Activated CD4-positive, alpha-beta T cell treated with anti-CD3 and anti-CD28 coated beads for 36 hours (primary cell): ENCODE measurements at regions of chr1 and their contacts with region 1.

Region 1: GRCh38 chr1:28914228-28915030 is at the start of gene EPB41:
- DNase-seq: peak; percentile 94
- ATAC-seq: peak; percentile 84
- H3K4me3 Mint-ChIP-seq: peak within 1 kb of the TSS; percentile 86
- H3K27ac Mint-ChIP-seq: peak within 1 kb of the TSS; percentile 93
- H3K4me1 Mint-ChIP-seq: peaks cover 47% of the 10 kb centered on the region
- H3K27me3 Mint-ChIP-seq: no peaks in the 10 kb centered on the region
- total RNA-seq, gene EPB41: 75.5 to 130 TPM

Region 2: DNA sequence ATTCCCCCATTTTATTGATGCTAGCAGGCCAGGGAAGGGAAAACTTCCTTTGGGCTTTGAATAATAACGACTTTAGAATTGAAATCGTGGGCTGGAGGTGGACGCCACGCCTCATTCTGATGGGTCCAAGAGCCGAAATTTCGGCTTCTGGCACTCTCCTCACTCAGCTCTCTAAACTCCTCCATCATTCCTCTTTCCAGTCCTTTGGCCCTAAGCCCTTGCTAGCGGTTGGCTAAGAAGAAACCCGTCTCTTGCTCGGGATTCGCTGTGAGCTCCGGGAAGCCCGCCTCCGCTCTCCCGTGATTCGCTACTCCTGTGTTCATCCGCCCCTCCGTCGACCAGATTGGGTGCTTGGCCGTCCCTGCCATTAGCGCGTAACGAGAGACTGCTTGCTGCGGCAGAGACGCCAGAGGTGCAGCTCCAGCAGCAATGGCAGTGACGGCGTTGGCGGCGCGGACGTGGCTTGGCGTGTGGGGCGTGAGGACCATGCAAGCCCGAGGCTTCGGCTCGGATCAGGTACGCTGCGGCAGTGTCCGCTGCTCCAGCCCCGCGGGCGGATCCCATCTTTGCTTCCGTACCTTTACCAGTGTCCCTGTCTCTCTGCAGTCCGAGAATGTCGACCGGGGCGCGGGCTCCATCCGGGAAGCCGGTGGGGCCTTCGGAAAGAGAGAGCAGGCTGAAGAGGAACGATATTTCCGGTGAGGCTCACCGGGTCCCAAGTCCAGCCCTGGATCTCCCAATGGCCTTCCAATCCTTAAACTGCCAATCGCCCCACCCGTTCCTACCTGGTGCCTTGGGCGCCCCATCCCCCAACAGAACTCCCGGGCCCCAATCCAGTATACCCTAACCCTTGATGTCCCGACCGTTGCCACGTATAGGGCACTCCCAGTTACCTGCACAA is 678.4 kb before region 1 on chr1 and contains the start of gene ATP5IF1:
- CTCF ChIA-PET with region 1: no interaction called
- POLR2A ChIA-PET with region 1: no interaction called
- intact Hi-C with region 1: no loop called
- DNase-seq: peak; percentile 97
- ATAC-seq: peak; percentile 97
- H3K4me3 Mint-ChIP-seq: no peak within 1 kb of the TSS
- H3K27ac Mint-ChIP-seq: no peak within 1 kb of the TSS
- H3K4me1 Mint-ChIP-seq: peaks cover 15% of the 10 kb centered on the region
- H3K27me3 Mint-ChIP-seq: no peaks in the 10 kb centered on the region
- total RNA-seq, gene ATP5IF1: 192 to 195 TPM

Region 3: DNA sequence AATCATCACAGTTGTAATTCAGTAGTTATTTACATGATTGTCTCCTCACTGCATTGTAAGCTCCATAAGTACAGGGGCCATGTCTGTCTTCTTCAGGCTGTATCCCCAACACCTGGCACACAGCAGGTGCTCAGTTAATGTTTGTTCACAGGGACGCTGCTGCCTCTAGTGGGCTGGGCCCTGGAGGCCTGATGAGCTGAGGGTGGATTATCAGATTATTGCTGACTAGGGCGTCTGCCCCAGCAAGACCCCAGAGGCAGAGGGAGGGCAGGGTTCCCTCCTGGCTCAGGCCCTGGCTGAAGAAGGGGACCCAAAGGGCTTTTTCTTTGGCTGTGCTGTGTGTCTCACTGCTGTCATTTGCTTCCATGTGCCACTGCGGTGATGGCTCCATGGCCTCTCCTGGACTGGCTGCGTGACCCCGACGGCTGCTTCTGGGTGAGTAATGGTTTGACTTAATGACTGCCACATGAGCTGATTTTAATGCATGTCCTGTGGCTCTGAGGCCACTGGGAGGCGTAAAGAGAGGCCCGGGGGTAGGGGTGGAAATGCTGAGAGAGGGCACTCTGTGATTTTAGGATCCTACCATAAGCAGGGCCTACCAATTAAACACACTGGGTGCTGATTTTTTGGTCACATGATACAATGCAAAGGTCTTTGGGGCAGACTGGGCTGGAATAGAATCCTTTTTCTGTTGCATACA is 20.9 kb before region 1 on chr1:
- CTCF ChIA-PET with region 1: interaction called, 11 read pairs
- POLR2A ChIA-PET with region 1: interaction called, 5 read pairs
- intact Hi-C with region 1: no loop called
- DNase-seq: peak; percentile 52
- ATAC-seq: peak; percentile 44
- H3K4me3 Mint-ChIP-seq: no peak overlapping the region
- H3K27ac Mint-ChIP-seq: no peak overlapping the region
- H3K4me1 Mint-ChIP-seq: peaks cover 21% of the 10 kb centered on the region
- H3K27me3 Mint-ChIP-seq: no peaks in the 10 kb centered on the region

Region 4: DNA sequence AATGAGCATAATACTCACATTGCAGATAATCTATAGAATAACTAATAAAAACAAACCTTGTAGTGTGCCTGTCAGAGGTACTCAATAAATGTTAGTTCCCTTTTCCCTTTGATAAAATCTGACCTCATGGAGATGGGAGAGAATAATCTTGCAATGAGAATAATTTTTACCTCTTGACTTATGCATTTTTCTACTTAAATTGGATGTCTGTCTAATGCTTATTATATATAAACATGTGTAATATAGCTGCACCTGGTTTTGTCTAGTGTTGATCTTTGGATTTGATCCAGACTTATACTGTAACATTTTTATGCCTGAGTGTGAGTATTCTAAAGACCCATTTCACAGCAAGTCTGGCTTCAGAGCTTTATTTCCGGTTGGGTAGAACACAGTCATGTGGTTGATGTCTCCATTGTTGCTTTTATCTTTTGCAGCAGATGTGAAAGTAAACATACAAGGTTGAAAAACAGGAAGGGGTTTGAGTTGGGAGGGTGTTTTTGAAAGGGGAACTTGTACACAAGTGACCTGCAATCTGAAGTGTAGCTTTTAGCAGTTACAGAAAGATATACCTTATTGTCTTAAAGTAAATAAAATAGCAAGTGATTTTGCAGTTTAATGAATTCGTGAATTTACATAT is 12.3 kb after region 1 on chr1:
- CTCF ChIA-PET with region 1: interaction called, 7 read pairs
- POLR2A ChIA-PET with region 1: interaction called, 8 read pairs
- intact Hi-C with region 1: loop called (anchors 1 kb)
- DNase-seq: peak; percentile 24
- ATAC-seq: peak; percentile 89
- H3K4me3 Mint-ChIP-seq: peak overlapping the region; percentile 53
- H3K27ac Mint-ChIP-seq: peak overlapping the region; percentile 94
- H3K4me1 Mint-ChIP-seq: peaks cover 56% of the 10 kb centered on the region
- H3K27me3 Mint-ChIP-seq: no peaks in the 10 kb centered on the region

Region 5: GRCh38 chr1:28933277-28933676 is 18.8 kb after region 1 on chr1:
- CTCF ChIA-PET with region 1: interaction called, 4 read pairs
- POLR2A ChIA-PET with region 1: interaction called, 7 read pairs
- intact Hi-C with region 1: loop called in 1 of 2 experiments (anchors 2 kb)
- DNase-seq: no peak
- ATAC-seq: peak; percentile 84
- H3K4me3 Mint-ChIP-seq: no peak overlapping the region
- H3K27ac Mint-ChIP-seq: peak overlapping the region; percentile 56
- H3K4me1 Mint-ChIP-seq: peaks cover 71% of the 10 kb centered on the region
- H3K27me3 Mint-ChIP-seq: no peaks in the 10 kb centered on the region

Region 6: DNA sequence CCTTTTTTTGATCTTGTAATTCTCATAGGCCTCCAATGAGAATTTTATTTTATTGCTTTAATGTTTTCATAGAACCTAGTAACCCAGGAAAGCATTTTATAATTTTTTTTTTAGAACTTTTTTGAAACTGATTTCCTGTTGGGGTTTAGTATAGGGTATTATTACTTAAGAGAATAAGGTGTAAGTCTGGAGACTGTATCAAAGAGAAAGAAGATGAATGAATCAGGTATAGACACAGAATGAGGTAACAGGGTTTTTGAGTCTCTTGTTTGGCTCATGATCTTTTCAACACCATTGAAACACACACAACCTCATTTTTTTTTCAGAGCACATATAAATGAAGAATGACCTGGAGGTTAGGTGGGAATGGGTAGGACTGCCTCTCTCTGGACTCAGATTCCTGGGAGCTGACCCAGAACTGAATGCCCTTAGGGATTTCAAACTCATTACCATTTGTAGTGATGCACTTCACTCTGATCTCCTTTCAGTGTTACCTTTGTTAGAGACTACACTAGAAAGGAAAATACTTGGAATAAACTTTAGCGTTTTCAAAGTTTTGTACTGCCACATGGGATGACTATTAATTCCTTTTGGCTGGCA is 50.9 kb after region 1 on chr1:
- CTCF ChIA-PET with region 1: interaction called, 3 read pairs
- POLR2A ChIA-PET with region 1: interaction called, 3 read pairs
- intact Hi-C with region 1: loop called (anchors 1 to 2 kb)
- DNase-seq: no peak
- ATAC-seq: peak; percentile 34
- H3K4me3 Mint-ChIP-seq: no peak overlapping the region
- H3K27ac Mint-ChIP-seq: peak overlapping the region; percentile 37
- H3K4me1 Mint-ChIP-seq: peaks cover 58% of the 10 kb centered on the region
- H3K27me3 Mint-ChIP-seq: no peaks in the 10 kb centered on the region

Region 7: GRCh38 chr1:28971980-28972771 is 57.7 kb after region 1 on chr1:
- CTCF ChIA-PET with region 1: no interaction called
- POLR2A ChIA-PET with region 1: no interaction called
- intact Hi-C with region 1: loop called (anchors 1 to 2 kb)
- DNase-seq: peak; percentile 46
- ATAC-seq: peak; percentile 89
- H3K4me3 Mint-ChIP-seq: peak overlapping the region; percentile 27
- H3K27ac Mint-ChIP-seq: peak overlapping the region; percentile 81
- H3K4me1 Mint-ChIP-seq: peaks cover 61% of the 10 kb centered on the region
- H3K27me3 Mint-ChIP-seq: no peaks in the 10 kb centered on the region

Region 8: GRCh38 chr1:29011775-29012174 is 97.3 kb after region 1 on chr1:
- CTCF ChIA-PET with region 1: no interaction called
- POLR2A ChIA-PET with region 1: no interaction called
- intact Hi-C with region 1: no loop called
- DNase-seq: no peak
- ATAC-seq: no peak
- H3K4me3 Mint-ChIP-seq: no peak overlapping the region
- H3K27ac Mint-ChIP-seq: no peak overlapping the region
- H3K4me1 Mint-ChIP-seq: peaks cover 11% of the 10 kb centered on the region
- H3K27me3 Mint-ChIP-seq: no peaks in the 10 kb centered on the region

Region 9: GRCh38 chr1:29124366-29125236 is 210.2 kb after region 1 on chr1:
- CTCF ChIA-PET with region 1: no interaction called
- POLR2A ChIA-PET with region 1: no interaction called
- intact Hi-C with region 1: loop called in 1 of 2 experiments (anchors 1 kb)
- DNase-seq: peak; percentile 79
- ATAC-seq: peak; percentile 62
- H3K4me3 Mint-ChIP-seq: peak overlapping the region; percentile 65
- H3K27ac Mint-ChIP-seq: no peak overlapping the region
- H3K4me1 Mint-ChIP-seq: peaks cover 2% of the 10 kb centered on the region
- H3K27me3 Mint-ChIP-seq: peaks cover 12% of the 10 kb centered on the region